ENCODE measurements at regions of chr11 and their contacts with region 1.

Region 1: DNA sequence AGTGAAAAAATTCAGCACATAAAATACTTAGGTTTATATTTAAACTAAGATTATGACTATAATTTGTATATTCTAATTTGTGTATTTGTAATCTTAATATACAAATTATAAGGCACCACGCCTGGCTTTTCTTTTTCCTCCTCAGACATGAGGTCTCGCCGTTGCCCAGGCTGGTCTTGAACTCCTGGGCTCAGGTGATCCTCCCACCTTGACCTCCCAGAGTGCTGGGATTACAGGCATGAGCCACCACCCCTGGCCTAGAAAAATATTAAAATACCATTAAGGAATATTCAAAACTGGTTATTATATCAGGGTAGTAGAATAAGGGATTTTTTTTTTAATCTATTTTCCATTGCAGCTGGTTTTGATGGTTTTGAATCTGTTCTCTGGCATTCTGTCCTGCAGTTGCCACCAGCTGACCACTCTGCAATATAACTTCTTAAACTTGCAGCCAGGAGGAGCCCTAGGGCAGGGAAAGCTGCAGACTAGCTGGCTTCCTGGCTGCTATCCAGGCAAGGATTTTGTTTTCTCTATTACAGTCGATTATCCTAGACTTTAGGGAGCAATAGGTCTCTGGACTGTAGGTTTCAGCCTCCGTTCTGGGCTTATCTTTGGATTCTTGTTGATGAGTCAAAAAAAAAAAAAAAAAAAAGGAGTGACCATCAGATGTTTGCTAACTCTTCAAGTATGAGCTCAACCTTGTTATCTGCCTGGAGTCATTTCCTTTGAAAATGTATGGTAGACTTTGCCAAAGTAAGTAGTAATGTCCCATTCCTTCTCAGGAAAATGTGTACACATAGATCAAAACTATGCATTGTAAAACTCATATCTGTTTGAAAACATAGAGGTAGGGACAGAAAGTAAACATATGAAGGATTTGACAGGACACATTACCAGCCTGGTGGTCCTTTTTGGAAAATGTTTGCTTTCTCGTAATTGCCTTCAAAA is 13.2 kb downstream of the POLA2 start:
- DNase-seq: peak; percentile 80 to 89 (median 85)
- ATAC-seq: peak; percentile 86
- H3K4me3 ChIP-seq: no peak overlapping the region
- H3K27ac ChIP-seq: peak overlapping the region; percentile 68 to 84 (median 76)
- H3K4me1 ChIP-seq: peaks cover 49% of the 10 kb centered on the region
- H3K27me3 ChIP-seq: no peaks in the 10 kb centered on the region
- CTCF ChIP-seq: peak; percentile 54 to 96 (median 90)
- POLR2A ChIP-seq: no peak

Region 2: GRCh38 chr11:65077451-65077850 is 197.6 kb before region 1 on chr11:
- intact Hi-C with region 1: no loop called
- DNase-seq: no peak
- ATAC-seq: no peak
- H3K4me3 ChIP-seq: no peak overlapping the region
- H3K27ac ChIP-seq: no peak overlapping the region
- H3K4me1 ChIP-seq: peaks cover 5% of the 10 kb centered on the region
- H3K27me3 ChIP-seq: no peaks in the 10 kb centered on the region
- CTCF ChIP-seq: no peak
- POLR2A ChIP-seq: no peak

Region 3: DNA sequence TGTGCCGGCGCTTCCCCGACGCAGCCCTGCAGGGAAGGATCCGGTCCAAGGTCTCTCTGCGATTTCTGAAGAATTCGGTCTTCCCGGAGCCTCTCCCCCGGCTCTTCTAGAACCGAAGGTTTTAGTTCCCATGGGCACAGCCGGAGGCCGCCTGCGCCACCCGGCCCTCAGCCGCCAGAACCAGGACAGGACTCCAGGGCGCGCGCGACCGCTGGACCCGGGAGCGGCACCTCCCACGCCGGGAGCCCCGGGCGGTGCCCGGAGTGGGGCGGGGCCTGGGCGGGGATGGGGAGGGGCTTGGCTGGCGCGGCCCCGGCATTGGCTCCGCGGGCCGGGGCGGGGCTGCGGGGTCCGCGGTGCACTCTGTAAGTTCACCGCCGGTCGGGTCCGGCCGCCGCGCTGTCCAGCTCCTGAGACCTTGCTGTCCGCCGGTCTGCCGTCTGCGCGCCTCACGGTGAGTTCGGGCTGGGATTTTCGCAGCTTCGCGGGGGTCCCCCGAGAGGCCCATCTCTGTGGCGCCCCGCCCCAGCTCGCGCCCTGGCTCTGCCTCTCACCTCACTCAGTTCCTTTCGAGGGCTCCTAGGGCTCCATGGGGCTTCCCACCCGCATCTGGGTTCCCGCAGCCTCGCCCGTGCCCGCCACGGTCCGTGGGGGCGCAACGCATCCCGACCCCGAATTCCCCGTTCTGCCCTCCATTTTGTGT is 39.6 kb after region 1 on chr11 and contains the start of gene CDC42EP2:
- intact Hi-C with region 1: loop called (anchors 5 kb)
- DNase-seq: peak; percentile 89 to 92 (median 90)
- ATAC-seq: peak; percentile 94
- H3K4me3 ChIP-seq: peak within 1 kb of the TSS; percentile 63 to 81
- H3K27ac ChIP-seq: peak within 1 kb of the TSS; percentile 61 to 86 (median 75)
- H3K4me1 ChIP-seq: peaks cover 41% of the 10 kb centered on the region
- H3K27me3 ChIP-seq: no peaks in the 10 kb centered on the region
- CTCF ChIP-seq: peak in 3 of 7 experiments; percentile 6 to 26 (median 16)
- POLR2A ChIP-seq: peak; percentile 53 to 66 (median 66)
- total RNA-seq, gene CDC42EP2: 8.3 to 16.8 TPM

Region 4: GRCh38 chr11:65425105-65425970 is 150.3 kb after region 1 on chr11:
- intact Hi-C with region 1: no loop called
- DNase-seq: peak; percentile 52 to 72 (median 56)
- ATAC-seq: no peak
- H3K4me3 ChIP-seq: peak overlapping the region; percentile 79 to 83
- H3K27ac ChIP-seq: peak overlapping the region; percentile 98 to 100 (median 100)
- H3K4me1 ChIP-seq: peaks cover 47% of the 10 kb centered on the region
- H3K27me3 ChIP-seq: no peaks in the 10 kb centered on the region
- CTCF ChIP-seq: peak in 1 of 7 experiments; percentile 36
- POLR2A ChIP-seq: no peak

Measured in body of pancreas (tissue), 4 donors.